Activated CD4-positive, alpha-beta T cell treated with anti-CD3 and anti-CD28 coated beads, Interleukin-2, amount 10 ng/mL, durations not matched to agents 7 days and 5 days (primary cell): ENCODE measurements at regions of chr18 and their contacts with region 1.

Region 1: DNA sequence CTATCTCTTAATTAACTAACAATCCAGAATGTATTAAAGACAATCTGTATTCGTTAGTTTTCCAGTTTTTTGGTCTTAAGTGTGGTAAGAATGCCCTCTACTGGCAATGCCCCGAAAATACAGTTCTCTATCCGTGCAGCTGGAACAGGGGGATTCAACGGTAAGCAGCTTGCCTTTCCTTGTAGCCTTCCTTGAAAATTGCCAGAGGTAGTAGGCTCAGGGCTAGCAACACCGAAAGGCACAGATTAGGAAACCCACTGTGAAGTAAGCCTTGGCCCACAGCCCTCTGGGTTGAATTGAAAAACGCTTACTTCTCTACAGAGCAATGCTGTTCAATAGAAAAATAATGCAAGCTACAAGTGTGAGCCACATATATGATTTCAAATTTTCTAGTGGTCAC is 17.1 kb upstream of the VPS4B start:
- DNase-seq: peak; percentile 43
- H3K4me3 Mint-ChIP-seq: no peak overlapping the region
- H3K27ac Mint-ChIP-seq: no peak overlapping the region
- H3K4me1 Mint-ChIP-seq: no peaks in the 10 kb centered on the region
- H3K27me3 Mint-ChIP-seq: peaks cover 17% of the 10 kb centered on the region

Region 2: GRCh38 chr18:63339920-63340484 is 99.3 kb before region 1 on chr18:
- CTCF ChIA-PET with region 1: no interaction called
- POLR2A ChIA-PET with region 1: interaction called, 21 read pairs
- DNase-seq: peak; percentile 58
- H3K4me3 Mint-ChIP-seq: no peak overlapping the region
- H3K27ac Mint-ChIP-seq: no peak overlapping the region
- H3K4me1 Mint-ChIP-seq: peaks cover 2% of the 10 kb centered on the region
- H3K27me3 Mint-ChIP-seq: no peaks in the 10 kb centered on the region